Left ventricle myocardium superior (tissue), 1 donor: ENCODE measurements at regions of chr3 and their contacts with region 1.

Region 1: GRCh38 chr3:40580494-40581091 is 55.8 kb downstream of the ZNF621 start:
- DNase-seq: peak; percentile 60
- ATAC-seq: peak; percentile 52

Region 2: DNA sequence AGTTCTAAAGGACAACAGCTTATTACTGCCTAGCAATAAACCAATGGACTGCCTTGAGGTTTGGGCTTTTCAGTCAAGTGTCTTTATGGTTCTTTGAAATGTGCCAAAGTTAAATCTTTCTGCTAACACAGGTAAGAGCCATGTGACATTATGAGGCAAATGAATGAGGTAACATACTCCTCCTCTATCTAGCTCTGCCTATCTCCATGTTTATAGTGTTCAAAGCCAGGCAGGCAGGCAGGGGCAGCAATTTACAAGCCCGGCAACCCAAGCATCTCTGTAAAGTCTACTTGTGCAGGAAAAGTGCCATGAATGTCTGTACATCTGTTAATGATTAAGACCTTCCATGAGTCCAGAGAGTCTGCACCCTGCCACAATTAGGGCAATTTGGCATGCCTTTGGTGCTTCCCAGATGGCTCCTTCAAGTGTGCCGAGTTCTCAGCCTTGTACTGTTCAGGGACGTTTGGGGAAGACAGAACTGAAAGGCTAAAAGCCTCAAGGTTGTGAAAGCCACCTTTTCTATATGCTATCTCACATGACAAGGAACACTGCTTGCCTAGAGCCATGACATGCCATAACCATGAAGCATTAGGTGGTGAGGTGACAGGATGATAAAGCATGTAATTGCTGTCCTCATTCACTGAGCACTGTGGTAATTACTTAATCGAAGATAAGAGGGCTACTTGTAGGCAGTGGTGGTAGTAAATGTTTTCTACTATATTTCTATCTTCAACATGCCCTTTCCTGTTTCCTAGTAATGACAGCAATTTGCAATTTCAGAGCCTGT is 312.5 kb before region 1 on chr3:
- intact Hi-C with region 1: no loop called
- DNase-seq: no peak
- ATAC-seq: peak; percentile 85

Region 3: DNA sequence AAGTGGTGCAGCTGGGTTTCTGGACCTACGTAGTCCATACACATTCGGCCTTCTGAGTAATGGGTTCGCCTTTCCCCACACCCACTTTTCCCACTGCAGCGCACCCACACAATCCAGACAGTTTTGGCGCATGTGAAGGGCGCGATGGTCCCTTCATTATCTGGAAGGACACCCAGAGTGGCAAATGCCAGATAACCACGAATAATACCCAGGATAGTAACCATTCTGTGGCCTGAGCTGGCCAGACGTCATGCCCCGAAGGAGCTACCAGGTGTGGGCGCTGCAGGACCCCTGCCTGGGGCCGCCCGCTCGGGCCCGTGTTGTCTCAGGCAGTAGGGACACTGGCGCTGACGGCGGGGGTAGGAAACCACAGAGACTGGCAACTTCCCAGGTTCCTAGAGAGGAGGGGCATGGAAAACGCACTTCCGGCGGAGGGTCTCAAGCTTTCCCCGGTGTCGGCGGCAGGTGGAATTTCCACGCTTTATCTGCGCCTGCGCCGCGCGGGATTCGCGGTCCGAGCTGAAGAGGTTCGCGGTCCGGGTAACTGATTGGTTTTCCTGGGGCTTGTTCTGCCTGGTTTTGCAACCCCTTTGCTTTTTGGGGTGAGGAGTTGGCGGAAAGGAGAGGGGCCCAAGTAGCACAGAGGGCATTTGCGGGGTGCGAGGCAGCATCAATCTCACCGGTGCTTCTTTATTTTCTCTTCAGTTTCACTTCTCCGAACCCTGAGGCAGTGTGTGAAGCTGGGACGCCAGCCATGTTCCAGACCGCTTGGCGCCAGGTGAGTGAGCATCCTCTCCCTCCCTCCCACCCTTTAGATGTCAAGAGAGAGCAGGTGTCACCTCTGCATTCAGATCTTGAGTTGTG is 74.8 kb before region 1 on chr3 and contains the start of gene ZNF620:
- intact Hi-C with region 1: no loop called
- DNase-seq: peak; percentile 80
- ATAC-seq: peak; percentile 96
- total RNA-seq, gene ZNF620: 1.7 TPM

Region 4: DNA sequence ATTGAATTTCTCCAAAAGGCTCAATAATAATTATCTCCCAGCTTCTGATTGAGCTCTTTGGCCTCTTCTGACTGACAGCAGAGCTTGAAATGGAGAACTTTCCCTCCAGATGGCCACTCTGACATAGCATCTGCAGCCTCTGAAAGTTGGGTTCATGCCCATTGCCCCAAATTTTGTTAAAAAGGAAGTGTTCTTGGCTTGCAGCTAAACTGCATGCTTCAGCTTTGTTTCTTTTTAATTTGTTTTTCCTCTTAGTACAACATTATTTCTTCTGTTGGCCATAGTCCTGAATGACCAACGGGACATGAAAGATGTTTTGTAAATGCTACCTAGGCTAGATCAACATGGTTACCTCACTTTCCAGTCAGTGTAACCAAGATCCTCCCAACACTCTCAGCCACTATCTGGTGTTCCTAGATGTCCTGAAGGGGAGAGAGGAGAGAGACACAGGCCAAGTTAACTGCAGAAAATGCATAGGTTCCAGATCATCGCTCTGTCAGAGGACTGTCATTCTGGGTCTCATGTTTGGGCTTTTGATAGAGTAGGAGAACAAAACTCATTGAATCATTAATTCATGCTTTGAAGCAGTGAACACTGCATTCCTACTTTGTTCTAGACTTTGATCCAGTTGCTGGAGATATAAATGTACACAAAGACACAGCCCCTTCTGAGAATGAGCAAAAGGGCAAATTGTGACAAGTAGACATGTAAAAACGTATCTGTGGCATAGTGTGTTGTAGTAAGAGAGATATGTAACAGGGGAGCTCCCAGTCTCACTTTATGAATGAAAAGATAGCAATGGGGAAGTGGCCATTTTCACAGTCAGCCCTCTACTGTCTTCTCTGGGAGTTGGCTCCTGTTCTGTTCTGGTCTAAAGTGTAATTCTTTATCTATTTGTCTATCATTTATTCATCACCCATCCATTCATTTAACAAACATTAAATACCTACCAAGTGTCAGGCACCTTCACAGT is 100.4 kb after region 1 on chr3:
- intact Hi-C with region 1: no loop called
- DNase-seq: no peak
- ATAC-seq: peak; percentile 59

Region 5: DNA sequence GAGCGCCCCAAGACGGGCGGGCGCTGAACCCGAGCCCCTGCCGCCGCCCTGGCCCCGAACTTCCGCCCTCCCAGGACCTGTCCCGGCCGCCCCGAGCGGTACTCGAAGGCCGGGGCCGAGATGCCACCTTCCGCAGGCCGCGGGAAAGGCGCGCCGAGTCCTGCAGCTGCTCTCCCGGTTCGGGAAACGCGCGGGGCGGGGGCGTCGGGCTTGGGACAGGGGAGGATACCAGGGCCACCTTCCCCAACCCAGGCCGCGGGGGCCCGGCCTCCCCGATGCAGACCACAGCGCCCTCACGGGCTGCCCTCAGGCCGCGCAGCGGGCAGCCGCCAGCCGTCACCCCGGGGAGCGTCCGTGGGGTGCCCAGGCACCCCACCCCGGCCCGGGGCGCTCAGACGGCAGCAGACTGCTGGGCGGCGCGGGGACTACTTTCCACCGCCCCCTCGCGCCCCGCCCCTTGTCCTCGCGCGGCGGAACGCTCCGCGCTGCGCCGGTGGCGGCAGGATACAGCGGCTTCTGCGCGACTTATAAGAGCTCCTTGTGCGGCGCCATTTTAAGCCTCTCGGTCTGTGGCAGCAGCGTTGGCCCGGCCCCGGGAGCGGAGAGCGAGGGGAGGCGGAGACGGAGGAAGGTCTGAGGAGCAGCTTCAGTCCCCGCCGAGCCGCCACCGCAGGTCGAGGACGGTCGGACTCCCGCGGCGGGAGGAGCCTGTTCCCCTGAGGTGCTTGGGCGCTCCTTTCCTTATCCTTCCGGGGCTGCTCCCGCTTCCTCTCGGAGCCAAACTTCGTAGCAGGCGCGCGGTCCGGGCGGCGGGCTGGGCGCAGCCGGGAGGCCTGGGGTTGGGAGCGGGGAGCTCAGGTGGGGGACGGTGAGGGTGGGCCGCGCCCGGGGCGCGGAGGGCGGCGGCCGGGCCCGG is 618.6 kb after region 1 on chr3 and contains the start of gene CTNNB1:
- intact Hi-C with region 1: loop called (anchors 10 kb)
- DNase-seq: peak; percentile 96
- ATAC-seq: peak; percentile 91
- total RNA-seq, gene CTNNB1: 145 TPM

Region 6: DNA sequence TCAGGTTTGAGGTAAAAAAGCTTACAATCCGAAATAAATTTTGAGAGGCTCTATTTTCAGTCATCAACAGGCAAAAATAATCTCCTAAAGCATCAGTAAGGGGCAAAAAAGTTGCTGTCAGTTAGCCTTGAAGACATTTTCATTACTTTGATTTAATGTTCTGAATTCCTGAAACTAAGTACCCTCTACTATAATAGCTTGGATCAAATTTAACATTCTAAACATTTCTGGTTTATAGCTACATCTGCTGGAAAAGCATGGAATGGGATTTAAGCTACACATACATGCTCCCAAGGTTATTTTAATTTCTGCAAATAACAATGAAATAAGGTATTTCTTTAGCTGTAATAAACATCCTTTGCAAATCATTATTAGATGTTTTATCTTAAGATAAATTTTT is 1135.9 kb after region 1 on chr3:
- intact Hi-C with region 1: loop called (anchors 10 kb)
- DNase-seq: no peak
- ATAC-seq: no peak

Region 7: GRCh38 chr3:41881233-41881821 is 1300.7 kb after region 1 on chr3:
- intact Hi-C with region 1: loop called (anchors 2 kb)
- DNase-seq: no peak
- ATAC-seq: no peak